CD8-positive, alpha-beta T cell (primary cell): ENCODE measurements at regions of chr6 and their contacts with region 1.

Region 1: DNA sequence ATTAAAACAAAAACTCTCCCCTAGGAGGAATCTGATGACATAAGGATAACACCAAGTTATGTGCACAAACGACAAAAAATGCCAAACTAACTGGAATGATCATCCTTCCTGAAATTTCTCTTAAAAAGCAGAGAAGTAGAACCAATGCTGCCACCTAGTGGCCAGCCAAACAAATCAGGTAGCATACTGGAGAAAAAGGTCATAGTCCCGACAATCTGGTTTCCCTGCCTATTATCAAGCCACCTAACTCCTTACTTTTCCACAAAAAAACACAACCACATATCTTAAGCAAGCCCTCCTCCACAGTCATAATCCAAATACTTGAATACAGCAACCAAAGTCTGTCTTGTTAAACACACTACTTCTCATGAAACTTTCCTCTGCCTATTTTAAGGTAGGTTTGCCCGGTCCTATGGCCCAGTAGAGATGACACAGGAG is 5.3 kb downstream of the OARD1 start:
- DNase-seq: peak in 8 of 9 experiments; percentile 42 to 83 (median 70)
- ATAC-seq: no peak
- H3K4me3 ChIP-seq: no peak overlapping the region
- H3K4me3 Mint-ChIP-seq: no peak overlapping the region
- H3K27ac ChIP-seq: no peak overlapping the region
- H3K27ac Mint-ChIP-seq: no peak overlapping the region
- H3K4me1 ChIP-seq: peaks cover 8% of the 10 kb centered on the region
- H3K4me1 Mint-ChIP-seq: peaks cover 24% of the 10 kb centered on the region
- H3K27me3 ChIP-seq: no peaks in the 10 kb centered on the region
- H3K27me3 Mint-ChIP-seq: no peaks in the 10 kb centered on the region
- CTCF ChIP-seq: peak; percentile 94

Region 2: DNA sequence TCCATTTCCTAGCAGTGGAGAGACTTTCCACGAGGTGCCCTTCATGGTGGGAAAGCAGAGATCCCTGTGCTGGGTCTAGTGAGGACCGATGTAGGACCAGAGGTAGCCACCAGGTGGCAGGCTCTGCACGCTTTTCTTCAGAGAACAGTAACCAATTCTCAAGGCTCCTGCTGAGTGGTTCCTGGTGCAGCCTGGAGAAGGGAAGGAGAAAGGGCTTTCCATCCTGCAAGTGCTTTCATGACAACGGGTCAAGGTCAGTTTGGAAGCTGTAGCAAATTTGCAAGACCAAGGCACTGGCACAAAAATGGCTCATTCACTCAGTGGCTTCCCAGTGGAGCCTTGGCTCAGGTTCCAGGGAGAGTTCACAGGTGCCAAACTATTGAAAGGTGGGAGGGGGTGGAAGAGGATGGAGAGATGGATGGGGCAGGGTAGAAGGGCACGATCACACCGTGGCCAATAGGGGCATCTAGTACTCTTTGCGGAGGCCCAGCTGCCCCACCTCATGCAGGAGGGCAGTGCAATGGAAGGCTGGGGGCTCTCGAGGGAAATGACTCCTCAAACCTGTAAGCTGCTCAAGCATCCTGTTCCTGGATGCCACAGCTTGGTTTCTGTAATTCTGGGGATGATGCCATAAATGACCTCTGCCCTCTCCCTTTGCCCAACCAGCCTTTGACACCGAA is 1718.8 kb before region 1 on chr6:
- CTCF ChIA-PET with region 1: no interaction called
- POLR2A ChIA-PET with region 1: no interaction called
- intact Hi-C with region 1: loop called in 1 of 2 experiments (anchors 10 kb)
- DNase-seq: peak in 8 of 9 experiments; percentile 5 to 66 (median 48)
- ATAC-seq: peak; percentile 48
- H3K4me3 ChIP-seq: no peak overlapping the region
- H3K4me3 Mint-ChIP-seq: no peak overlapping the region
- H3K27ac ChIP-seq: no peak overlapping the region
- H3K27ac Mint-ChIP-seq: no peak overlapping the region
- H3K4me1 ChIP-seq: no peaks in the 10 kb centered on the region
- H3K4me1 Mint-ChIP-seq: no peaks in the 10 kb centered on the region
- H3K27me3 ChIP-seq: no peaks in the 10 kb centered on the region
- H3K27me3 Mint-ChIP-seq: peaks cover 4% of the 10 kb centered on the region
- CTCF ChIP-seq: peak; percentile 75

Region 3: GRCh38 chr6:39361657-39362486 is 1705.0 kb before region 1 on chr6:
- CTCF ChIA-PET with region 1: no interaction called
- POLR2A ChIA-PET with region 1: no interaction called
- intact Hi-C with region 1: loop called in 1 of 2 experiments (anchors 5 kb)
- DNase-seq: peak in 7 of 9 experiments; percentile 14 to 58 (median 36)
- ATAC-seq: peak; percentile 36
- H3K4me3 ChIP-seq: no peak overlapping the region
- H3K4me3 Mint-ChIP-seq: no peak overlapping the region
- H3K27ac ChIP-seq: no peak overlapping the region
- H3K27ac Mint-ChIP-seq: no peak overlapping the region
- H3K4me1 ChIP-seq: peaks cover 3% of the 10 kb centered on the region
- H3K4me1 Mint-ChIP-seq: peaks cover 2% of the 10 kb centered on the region
- H3K27me3 ChIP-seq: no peaks in the 10 kb centered on the region
- H3K27me3 Mint-ChIP-seq: peaks cover 10% of the 10 kb centered on the region
- CTCF ChIP-seq: peak; percentile 47

Region 4: DNA sequence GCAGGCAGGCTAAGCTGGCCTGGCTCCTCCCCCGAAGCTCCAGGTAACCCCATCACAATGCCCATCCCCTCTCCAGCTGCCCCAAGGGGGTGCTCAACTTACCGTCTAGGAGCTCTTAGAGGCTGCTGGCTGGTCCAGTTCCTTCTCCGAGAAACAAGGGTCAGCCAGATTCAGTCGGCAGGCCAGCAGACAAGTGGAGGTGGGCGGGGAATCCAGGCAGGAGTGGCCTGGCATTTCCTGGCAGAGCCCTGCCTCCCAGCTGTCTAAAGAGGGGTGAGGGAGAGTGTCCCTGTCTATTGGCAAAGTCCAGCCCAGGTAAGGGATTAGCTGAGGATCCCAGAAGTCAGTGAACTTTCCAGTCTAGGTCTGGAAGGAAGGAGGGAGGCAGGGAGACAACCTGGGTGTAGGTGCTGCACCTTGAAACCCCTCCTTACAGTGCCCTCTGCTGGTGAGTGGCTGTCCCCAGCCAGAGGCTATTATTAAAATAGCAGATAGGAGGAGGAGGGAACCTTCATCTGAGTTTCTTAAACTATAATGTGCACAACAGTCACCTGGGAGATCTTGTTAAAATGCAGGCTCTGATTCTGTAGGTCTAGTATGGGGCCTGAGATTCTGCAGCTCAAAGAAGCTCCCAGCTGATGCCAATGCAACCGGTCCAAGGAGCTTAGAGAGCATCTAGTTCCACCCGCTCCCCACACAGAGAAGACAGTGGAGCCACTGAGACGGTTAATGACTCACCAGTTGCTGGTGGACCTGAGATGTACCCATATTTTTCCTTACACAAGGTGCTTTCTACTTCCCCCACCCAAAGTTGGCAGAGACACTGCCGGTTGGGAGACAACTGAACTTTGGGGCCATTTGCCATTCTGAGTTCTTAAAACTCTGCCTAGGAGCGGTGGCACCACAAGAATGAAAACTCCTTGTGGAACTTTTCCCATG is 27.6 kb before region 1 on chr6 and contains the start of gene UNC5CL:
- CTCF ChIA-PET with region 1: interaction called, 5 read pairs
- POLR2A ChIA-PET with region 1: no interaction called
- intact Hi-C with region 1: loop called in 1 of 2 experiments (anchors 1 kb)
- DNase-seq: peak; percentile 16 to 62 (median 56)
- ATAC-seq: peak; percentile 62
- H3K4me3 ChIP-seq: no peak within 1 kb of the TSS
- H3K4me3 Mint-ChIP-seq: no peak within 1 kb of the TSS
- H3K27ac ChIP-seq: no peak within 1 kb of the TSS
- H3K27ac Mint-ChIP-seq: no peak within 1 kb of the TSS
- H3K4me1 ChIP-seq: no peaks in the 10 kb centered on the region
- H3K4me1 Mint-ChIP-seq: no peaks in the 10 kb centered on the region
- H3K27me3 ChIP-seq: no peaks in the 10 kb centered on the region
- H3K27me3 Mint-ChIP-seq: no peaks in the 10 kb centered on the region
- CTCF ChIP-seq: peak; percentile 55
- total RNA-seq, gene UNC5CL: 1.4 to 2.3 TPM

Region 5: GRCh38 chr6:41051873-41052272 is 15.0 kb before region 1 on chr6:
- CTCF ChIA-PET with region 1: interaction called, 13 read pairs
- POLR2A ChIA-PET with region 1: interaction called, 3 read pairs
- intact Hi-C with region 1: no loop called
- DNase-seq: peak in 1 of 9 experiments; percentile 22
- ATAC-seq: peak; percentile 44
- H3K4me3 ChIP-seq: no peak overlapping the region
- H3K4me3 Mint-ChIP-seq: peak overlapping the region; percentile 9
- H3K27ac ChIP-seq: no peak overlapping the region
- H3K27ac Mint-ChIP-seq: peak overlapping the region; percentile 53
- H3K4me1 ChIP-seq: peaks cover 15% of the 10 kb centered on the region
- H3K4me1 Mint-ChIP-seq: peaks cover 17% of the 10 kb centered on the region
- H3K27me3 ChIP-seq: no peaks in the 10 kb centered on the region
- H3K27me3 Mint-ChIP-seq: no peaks in the 10 kb centered on the region
- CTCF ChIP-seq: no peak